GM10248 (cell line): ENCODE measurements at regions of chr1 and their contacts with region 1.

Region 1: GRCh38 chr1:31789259-31790065 is 25.3 kb upstream of the ADGRB2 start:
- DNase-seq: peak; percentile 97
- CTCF ChIP-seq: peak; percentile 99

Region 2: DNA sequence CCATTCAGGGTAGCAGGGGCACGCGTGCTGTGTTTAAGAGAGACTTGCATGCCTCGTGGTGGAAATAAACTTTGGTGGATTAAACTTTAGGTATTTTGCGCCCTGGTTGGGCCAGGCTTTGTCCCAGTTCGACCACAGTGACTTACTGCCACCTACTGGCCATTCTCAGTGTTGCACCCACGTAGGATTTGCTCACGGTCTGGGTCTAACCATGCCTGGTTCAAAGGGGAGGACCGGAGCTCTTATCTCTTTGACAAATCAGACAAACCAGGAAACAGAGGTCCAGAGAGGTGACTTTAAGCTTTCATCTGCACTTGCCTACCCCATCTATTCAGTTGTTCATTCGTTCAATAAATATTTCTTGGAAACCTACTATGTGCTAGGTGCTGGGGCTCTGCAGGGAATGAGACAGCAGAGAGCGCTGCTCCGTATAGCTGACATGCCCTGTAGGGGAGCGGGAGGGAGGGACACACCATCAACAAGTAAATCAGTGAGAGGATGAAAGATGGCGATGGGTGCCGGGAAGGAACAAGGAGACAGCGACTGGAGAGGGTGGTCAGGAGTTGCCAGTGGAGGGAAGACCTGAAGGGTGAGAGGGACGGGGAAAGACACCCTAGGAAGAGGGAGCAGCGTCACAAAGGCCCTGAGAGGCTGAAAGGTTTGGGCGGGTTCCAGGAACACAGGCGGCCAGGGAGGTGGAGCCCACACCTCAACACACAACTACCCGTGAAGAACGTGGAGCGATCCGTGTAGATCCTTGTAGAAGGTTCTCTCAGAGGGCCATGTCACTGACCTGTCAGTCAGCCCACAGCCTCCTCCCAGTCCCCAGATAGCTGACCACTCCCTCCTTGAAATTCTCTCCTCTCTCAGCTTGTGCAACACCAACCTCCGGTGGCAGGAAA is 240.3 kb before region 1 on chr1:
- CTCF ChIA-PET with region 1: interaction called, 15 read pairs
- POLR2A ChIA-PET with region 1: no interaction called
- DNase-seq: peak; percentile 87
- CTCF ChIP-seq: peak; percentile 89

Region 3: GRCh38 chr1:31663622-31664452 is 125.6 kb before region 1 on chr1:
- CTCF ChIA-PET with region 1: interaction called, 87 read pairs
- POLR2A ChIA-PET with region 1: no interaction called
- DNase-seq: peak; percentile 86
- CTCF ChIP-seq: peak; percentile 96

Region 4: DNA sequence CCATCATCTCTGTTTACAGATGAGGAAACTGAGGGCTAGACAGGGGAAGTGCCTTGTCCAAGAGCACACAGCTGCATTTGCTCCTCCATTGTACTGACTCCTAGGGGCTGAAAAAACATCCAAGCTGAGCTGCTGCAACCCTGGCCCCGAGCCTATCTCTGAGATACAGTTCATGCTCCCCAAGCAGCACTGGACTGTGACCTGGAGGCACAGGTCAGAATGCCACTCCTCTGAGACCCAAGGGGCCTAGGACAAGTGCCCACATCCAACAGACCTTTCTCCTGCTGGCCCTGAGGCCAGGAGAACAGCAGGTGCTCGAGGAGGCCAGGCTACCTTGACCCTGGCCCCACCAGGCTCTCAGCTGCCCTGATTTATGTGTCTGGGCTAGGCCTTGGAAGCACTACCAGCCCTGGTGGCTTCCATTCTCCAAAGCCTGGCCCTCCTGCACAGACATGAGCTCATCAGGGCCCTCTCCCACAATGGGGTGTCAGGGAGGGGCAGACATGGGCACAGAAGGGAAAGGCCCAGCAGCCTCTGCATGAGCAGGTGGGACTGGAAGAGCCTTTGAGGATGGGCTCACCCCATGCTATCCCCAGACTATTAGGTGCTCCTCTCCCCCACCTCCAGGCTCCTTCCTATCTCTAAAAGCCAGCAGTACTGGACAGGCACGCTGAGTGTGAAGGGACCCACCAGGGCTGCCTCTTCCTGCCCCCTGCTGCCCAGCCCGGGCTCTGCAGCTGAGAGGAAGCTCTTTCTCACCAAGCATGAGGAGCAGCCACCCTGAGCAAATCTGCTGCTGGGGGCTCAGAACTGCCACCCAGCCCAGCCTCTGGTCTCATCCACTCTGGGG is 44.1 kb before region 1 on chr1:
- CTCF ChIA-PET with region 1: interaction called, 12 read pairs
- POLR2A ChIA-PET with region 1: no interaction called
- DNase-seq: peak; percentile 87
- CTCF ChIP-seq: peak; percentile 74

Region 5: GRCh38 chr1:31775210-31775999 is 14.1 kb before region 1 on chr1:
- CTCF ChIA-PET with region 1: interaction called, 30 read pairs
- POLR2A ChIA-PET with region 1: no interaction called
- DNase-seq: no peak
- CTCF ChIP-seq: no peak

Region 6: GRCh38 chr1:31815752-31816500 is 26.5 kb after region 1 on chr1 and contains the start of gene SPOCD1:
- CTCF ChIA-PET with region 1: interaction called, 12 read pairs
- POLR2A ChIA-PET with region 1: no interaction called
- DNase-seq: peak; percentile 83
- CTCF ChIP-seq: peak; percentile 83